Colonic mucosa (tissue), 4 donors: ENCODE measurements at regions of chr5 and their contacts with region 1.

Region 1: DNA sequence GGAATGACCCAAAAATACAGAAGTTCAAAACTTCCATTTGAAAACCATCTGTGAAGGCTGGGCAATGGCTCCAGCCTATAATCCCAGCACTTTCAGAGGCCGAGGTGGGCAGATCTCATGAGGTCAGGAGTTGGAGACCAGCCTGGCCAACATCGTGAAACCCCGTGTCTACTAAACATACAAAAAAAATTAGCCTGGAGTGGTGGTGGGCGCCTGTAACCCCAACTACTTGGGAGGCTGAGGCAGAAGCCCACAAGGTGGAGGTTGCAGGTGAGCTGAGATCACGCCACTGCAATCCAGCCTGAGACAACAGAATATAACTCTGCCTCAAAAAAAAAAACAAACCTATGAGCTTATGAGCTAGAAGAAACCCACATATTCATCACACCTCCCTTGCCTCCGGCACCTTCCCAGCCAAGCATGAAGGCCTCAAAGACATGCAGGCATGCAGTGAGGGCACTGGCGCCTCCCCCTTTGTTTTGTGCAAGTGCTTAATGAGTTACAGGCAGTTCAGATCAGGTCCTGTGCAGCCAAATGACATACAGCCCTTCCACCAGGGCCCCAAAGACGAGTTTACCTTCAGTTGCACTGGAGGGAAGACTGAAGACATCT is 9.9 kb downstream of the HNRNPH1 start:
- DNase-seq: no peak
- H3K4me3 ChIP-seq: no peak overlapping the region
- H3K27ac ChIP-seq: no peak overlapping the region
- H3K4me1 ChIP-seq: no peaks in the 10 kb centered on the region
- H3K27me3 ChIP-seq: no peaks in the 10 kb centered on the region
- CTCF ChIP-seq: no peak

Region 2: DNA sequence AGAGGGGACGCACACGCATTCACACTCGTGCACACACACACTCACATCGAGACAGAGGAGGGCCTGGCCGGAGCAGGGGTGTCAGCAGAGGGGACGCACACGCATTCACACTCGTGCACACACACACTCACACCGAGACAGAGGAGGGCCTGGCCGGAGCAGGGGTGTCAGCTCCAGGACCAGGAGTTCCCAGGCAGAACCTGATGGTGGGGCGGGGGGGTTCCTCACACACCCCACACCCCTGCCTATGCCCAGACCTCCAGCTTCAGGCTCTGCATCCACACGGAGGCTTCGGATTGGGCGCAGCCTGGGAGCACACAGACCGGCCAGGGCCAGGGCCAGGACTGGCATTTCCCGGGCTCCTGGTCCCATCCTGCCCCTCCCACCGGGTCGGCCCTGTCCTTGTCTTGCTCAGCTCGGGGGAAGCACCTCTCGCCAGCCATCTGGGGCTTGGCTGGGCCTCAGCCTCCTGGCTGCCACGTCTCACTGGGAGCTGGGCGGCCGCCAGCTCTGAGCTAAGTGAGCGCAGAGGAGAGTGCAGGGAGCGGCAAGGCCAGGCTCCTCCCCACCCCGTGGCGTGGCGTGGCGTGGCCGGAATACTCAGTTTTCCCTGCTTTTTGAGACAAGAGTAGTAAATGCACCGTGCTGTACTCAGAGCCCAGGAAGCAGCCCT is 299.6 kb before region 1 on chr5:
- intact Hi-C with region 1: no loop called
- DNase-seq: peak; percentile 63
- H3K4me3 ChIP-seq: no peak overlapping the region
- H3K27ac ChIP-seq: no peak overlapping the region
- H3K4me1 ChIP-seq: no peaks in the 10 kb centered on the region
- H3K27me3 ChIP-seq: no peaks in the 10 kb centered on the region
- CTCF ChIP-seq: no peak

Region 3: GRCh38 chr5:179720222-179720621 is 106.7 kb after region 1 on chr5:
- intact Hi-C with region 1: loop called (anchors 10 kb)
- DNase-seq: no peak
- H3K4me3 ChIP-seq: no peak overlapping the region
- H3K27ac ChIP-seq: no peak overlapping the region
- H3K4me1 ChIP-seq: no peaks in the 10 kb centered on the region
- H3K27me3 ChIP-seq: no peaks in the 10 kb centered on the region
- CTCF ChIP-seq: no peak